H1 (cell line): ENCODE measurements at regions of chr1 and their contacts with region 1.

Region 1: DNA sequence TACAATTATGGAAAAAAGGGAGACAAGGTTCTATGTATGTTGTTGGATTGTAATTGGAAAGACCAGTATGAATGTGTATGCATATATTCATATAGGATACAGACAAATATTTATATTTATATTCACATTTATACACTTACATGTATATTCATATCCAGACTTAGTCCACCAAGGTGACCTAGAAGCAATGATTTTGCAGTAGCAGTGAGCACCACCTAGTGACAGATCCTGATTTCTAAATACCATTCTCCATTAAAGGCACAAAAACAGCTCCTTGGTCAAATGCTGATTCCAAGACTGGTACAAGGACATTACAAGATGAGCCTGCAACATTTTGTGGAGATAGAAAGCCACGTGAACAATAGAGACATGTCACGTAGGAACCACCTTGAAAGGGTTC is 153.4 kb downstream of the SDCCAG8 start:
- DNase-seq: no peak
- H3K4me3 ChIP-seq: no peak overlapping the region
- H3K27ac ChIP-seq: no peak overlapping the region
- H3K4me1 ChIP-seq: peaks cover 2 to 7% (median 6%) of the 10 kb centered on the region in 4 experiments; a peak in 6 of 7 replicates
- H3K27me3 ChIP-seq: no peaks in the 10 kb centered on the region
- CTCF ChIP-seq: peak in 2 of 3 experiments; percentile 29 to 52; a peak in 2 of 4 replicates
- EP300 ChIP-seq: no peak
- POLR2A ChIP-seq: no peak
- RAD21 ChIP-seq: peak; percentile 73 to 74

Region 2: DNA sequence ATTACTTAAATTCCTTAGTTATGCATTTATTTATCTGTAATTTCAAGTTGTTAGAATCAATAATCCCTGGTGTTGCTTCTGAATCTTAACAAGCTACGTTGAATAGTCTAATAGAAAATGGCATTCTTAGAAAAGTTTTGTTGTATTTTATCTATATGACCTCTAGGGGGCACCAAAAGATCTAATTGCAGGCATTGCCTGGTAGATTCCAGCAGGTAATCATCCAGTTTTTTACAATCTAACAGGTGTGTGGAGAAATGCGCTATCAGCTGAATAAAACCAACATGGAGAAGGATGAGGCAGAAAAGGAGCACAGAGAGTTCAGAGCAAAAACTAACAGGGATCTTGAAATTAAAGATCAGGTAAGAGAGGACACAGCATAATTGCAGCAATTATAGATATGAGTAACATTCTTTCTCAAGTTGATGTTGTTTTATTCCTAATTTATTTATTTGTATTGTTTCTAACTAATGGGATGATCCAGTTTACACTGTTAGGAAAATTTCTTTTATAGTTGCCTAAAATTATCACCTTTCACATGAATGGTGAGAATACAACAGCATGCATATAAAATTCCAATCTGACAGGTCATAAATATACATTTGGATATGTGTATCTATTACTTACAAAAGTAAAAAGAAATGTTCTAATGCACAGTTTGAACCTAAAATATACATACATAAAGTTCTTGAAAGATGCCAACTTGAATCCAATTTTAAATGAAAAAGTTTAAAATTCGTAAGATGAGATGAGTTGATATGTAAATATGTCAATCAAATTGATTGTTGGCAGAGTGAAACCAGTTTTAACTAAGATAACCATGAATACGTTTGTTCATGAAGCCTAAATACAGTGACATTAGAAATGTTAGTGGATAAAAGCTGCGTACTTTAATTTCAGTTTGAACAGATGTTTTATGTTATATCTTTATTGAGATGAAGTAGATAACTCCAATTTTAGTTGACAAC is 65.0 kb before region 1 on chr1:
- CTCF ChIA-PET with region 1: interaction called, 49 read pairs
- POLR2A ChIA-PET with region 1: no interaction called
- DNase-seq: no peak
- H3K4me3 ChIP-seq: no peak overlapping the region
- H3K27ac ChIP-seq: no peak overlapping the region
- H3K4me1 ChIP-seq: no peaks in the 10 kb centered on the region
- H3K27me3 ChIP-seq: no peaks in the 10 kb centered on the region
- CTCF ChIP-seq: peak in 2 of 3 experiments; percentile 40 to 53; a peak in 2 of 4 replicates
- EP300 ChIP-seq: no peak
- POLR2A ChIP-seq: no peak
- RAD21 ChIP-seq: peak; percentile 87 to 90

Region 3: GRCh38 chr1:243375596-243375995 is 33.7 kb before region 1 on chr1:
- CTCF ChIA-PET with region 1: no interaction called
- POLR2A ChIA-PET with region 1: no interaction called
- DNase-seq: no peak
- H3K4me3 ChIP-seq: no peak overlapping the region
- H3K27ac ChIP-seq: no peak overlapping the region
- H3K4me1 ChIP-seq: 0 out of 7 replicates have a peak, but pooled peaks cover 0 to 1% (median 0%) of the 10 kb centered on the region in 4 experiments
- H3K27me3 ChIP-seq: no peaks in the 10 kb centered on the region
- CTCF ChIP-seq: no peak
- EP300 ChIP-seq: no peak
- POLR2A ChIP-seq: no peak
- RAD21 ChIP-seq: no peak

Region 4: DNA sequence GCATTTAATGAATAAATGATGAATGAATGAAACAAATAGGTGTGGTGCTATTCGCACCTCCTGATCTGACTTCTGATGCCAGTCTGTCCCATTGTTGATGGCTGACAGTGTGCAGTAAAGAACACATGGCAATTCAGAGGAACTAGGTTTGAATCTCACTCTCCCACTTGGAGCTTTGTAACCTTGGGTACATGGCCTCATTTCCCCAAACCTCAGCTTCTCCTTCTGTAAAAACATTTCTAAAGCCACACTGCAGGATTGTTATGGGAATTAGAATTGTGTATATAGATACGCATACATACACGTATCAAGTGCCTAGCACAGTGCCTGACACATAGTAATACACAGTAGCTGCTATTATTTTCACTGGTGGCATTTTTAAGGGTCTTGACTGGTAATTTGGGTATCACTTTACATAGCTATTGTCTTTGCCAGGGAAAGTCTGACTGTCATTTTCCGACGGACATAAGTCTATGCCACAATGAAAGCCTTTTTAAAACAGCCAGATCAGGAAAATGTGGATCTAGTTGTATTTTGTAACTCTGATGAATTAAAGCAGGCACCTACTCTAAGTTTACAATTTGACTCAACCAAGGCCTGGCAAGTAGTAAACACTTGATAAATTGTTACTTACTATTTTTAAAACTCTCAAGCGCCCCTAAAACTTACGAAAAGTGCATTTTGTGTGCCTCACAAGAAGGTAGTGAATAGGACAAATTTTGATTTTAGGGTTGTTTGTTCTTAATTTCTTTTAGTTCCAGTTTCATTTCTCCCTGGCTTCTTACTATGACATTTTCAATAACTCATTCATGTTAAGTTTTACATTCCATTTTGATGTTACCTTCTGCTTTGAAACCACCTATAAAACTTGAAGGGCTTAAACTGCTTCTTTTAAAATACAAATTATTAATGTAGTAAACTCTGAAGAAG is 11.0 kb after region 1 on chr1:
- CTCF ChIA-PET with region 1: interaction called, 13 read pairs
- POLR2A ChIA-PET with region 1: no interaction called
- DNase-seq: no peak
- H3K4me3 ChIP-seq: no peak overlapping the region
- H3K27ac ChIP-seq: no peak overlapping the region
- H3K4me1 ChIP-seq: peaks cover 0 to 4% (median 4%) of the 10 kb centered on the region in 4 experiments; a peak in 4 of 7 replicates
- H3K27me3 ChIP-seq: peaks cover 0 to 2% (median 0%) of the 10 kb centered on the region in 4 experiments; a peak in 1 of 7 replicates
- CTCF ChIP-seq: no peak
- EP300 ChIP-seq: no peak
- POLR2A ChIP-seq: no peak
- RAD21 ChIP-seq: no peak